ENCODE measurements at regions of chr3 and their contacts with region 1.

Region 1: DNA sequence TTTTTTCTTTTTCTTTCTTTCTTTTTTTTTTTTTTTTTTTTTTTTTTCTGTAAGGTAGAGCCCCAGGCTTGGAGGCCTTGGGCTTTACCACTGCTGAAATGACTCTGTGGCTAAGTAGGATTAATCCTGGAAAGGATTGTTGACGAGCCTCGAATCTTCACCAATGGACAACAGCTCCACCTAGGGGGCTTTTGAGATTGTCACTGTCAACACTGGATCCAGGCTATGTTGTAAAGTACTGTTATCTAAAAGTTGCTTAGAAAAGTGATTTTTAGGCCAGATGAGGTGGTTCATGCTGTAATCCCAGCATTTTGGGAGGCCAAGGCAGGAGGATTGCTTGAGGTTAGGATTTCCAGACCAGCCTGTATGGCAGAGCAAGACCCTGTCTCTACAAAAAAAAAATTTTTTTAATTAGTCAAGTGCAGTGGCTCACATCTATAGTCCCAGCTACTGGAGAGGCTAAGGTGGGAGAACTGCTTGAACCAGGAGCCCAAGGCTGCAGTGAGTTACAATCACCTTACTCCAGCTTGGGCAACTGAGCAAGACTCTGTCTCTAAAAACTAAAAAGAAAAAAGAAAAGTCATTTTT is 41.6 kb downstream of the KLHL18 start:
- DNase-seq: no peak
- ATAC-seq: peak; percentile 85

Region 2: DNA sequence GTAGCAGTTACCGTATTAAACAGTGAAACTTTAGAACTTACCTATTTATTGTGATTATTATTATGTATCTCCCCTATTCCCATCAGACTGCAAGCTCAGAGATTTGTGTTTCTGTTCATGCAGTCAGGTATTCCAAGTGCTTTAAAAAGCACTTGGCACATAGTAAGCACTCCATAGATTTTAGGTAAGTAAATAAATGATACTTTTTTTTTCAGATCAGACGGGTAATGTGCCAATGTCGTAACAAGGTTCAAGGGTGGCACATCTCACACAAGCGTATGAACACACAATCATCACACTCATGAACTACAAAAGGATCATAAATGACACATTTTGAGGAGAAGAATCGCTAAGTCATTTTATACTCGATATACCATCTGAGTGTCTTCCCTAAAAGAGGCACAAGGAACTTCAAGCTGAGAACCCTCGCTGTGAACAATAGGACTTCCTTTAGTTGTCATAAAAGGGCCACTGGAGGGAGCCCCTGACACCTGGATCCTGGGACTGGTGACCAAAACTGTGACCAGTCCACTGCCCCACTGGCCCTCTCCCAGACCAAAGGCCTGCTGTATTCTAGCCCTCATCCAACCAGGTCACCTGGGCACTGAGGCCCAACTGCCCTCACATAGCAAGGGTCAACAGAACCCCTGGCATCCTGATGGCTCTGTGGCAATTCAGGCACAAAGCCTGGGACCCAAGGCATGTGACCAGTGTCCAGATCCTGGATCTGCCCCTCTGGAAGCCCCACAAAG is 73.9 kb before region 1 on chr3:
- intact Hi-C with region 1: loop called (anchors 2 kb)
- DNase-seq: no peak
- ATAC-seq: peak; percentile 73

Region 3: DNA sequence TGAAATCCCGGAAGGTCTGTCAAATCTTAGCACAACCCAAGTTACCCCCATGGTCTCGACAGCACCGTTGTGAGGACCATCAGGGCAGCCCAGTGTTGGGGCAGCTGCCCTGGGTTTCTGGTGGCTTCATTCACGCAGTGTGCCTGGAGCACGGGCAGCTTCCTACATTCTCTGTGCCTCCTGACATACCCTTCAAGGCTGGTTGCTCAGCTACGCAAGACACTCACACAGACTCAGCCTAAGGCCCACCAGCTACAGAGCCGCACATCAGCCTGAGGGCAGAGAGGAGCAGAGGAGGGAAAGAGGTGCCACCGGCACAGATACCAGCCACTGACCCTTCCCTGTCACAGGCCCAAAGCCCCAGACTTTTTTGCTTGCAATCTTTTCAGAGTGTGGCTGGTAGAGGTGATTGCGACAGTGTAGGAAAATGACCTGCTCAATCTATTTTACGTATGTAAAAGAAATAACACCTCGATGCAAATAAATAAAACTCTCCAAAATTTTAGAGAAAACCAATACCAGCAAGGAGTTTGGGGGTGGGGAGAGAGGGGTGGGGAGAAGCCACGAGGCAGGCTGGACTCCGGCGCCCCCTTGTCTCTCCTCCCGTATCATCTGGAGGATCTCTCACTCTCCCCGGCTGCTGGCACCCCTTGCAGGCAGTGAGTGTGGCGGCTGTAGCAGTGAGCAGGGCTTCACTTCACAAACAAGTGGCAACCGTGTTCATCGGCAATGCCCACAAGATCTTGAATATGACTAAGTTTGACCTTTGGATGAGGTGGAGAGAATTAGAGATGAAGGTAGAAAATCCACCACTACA is 241.6 kb after region 1 on chr3:
- intact Hi-C with region 1: no loop called
- DNase-seq: no peak
- ATAC-seq: no peak

Region 4: GRCh38 chr3:47605652-47606051 is 281.3 kb after region 1 on chr3:
- intact Hi-C with region 1: no loop called
- DNase-seq: no peak
- ATAC-seq: no peak

Region 5: GRCh38 chr3:47849699-47850563 is 525.6 kb after region 1 on chr3:
- intact Hi-C with region 1: no loop called
- DNase-seq: no peak
- ATAC-seq: peak; percentile 6

Measured in Right ventricle myocardium inferior (tissue), 1 donor.